Left lung (tissue), 14 donors: ENCODE measurements at regions of chr6 and their contacts with region 1.

Region 1: GRCh38 chr6:37018198-37019064 is 13.0 kb downstream of the FGD2 start:
- DNase-seq: peak; percentile 68 to 95 (median 90)
- ATAC-seq: peak; percentile 98
- H3K4me3 ChIP-seq: no peak overlapping the region
- H3K27ac ChIP-seq: peak overlapping the region in 1 of 2 donors; percentile 50
- H3K4me1 ChIP-seq: peaks cover 0 to 26% of the 10 kb centered on the region in 2 donors
- H3K27me3 ChIP-seq: no peaks in the 10 kb centered on the region
- CTCF ChIP-seq: peak; percentile 81 to 94

Region 2: GRCh38 chr6:36765594-36766398 is 252.6 kb before region 1 on chr6:
- intact Hi-C with region 1: loop called in 1 of 2 experiments (anchors 2 kb)
- DNase-seq: peak; percentile 51 to 91 (median 85)
- ATAC-seq: peak; percentile 95
- H3K4me3 ChIP-seq: no peak overlapping the region
- H3K27ac ChIP-seq: no peak overlapping the region
- H3K4me1 ChIP-seq: peaks cover 0 to 44% of the 10 kb centered on the region in 2 donors
- H3K27me3 ChIP-seq: no peaks in the 10 kb centered on the region
- CTCF ChIP-seq: peak; percentile 88 to 92

Region 3: GRCh38 chr6:37131104-37131959 is 112.9 kb after region 1 on chr6:
- intact Hi-C with region 1: no loop called
- DNase-seq: peak in 2 of 4 donors; percentile 72 to 81
- ATAC-seq: peak; percentile 63
- H3K4me3 ChIP-seq: no peak overlapping the region
- H3K27ac ChIP-seq: peak overlapping the region; percentile 77 to 85
- H3K4me1 ChIP-seq: peaks cover 17 to 55% of the 10 kb centered on the region in 2 donors
- H3K27me3 ChIP-seq: no peaks in the 10 kb centered on the region
- CTCF ChIP-seq: no peak

Region 4: GRCh38 chr6:37210313-37210968 is 192.0 kb after region 1 on chr6:
- intact Hi-C with region 1: loop called in 1 of 2 experiments (anchors 5 kb)
- DNase-seq: peak in 3 of 4 donors; percentile 57 to 83 (median 68)
- ATAC-seq: peak; percentile 88
- H3K4me3 ChIP-seq: no peak overlapping the region
- H3K27ac ChIP-seq: no peak overlapping the region
- H3K4me1 ChIP-seq: peaks cover 0 to 50% of the 10 kb centered on the region in 2 donors
- H3K27me3 ChIP-seq: no peaks in the 10 kb centered on the region
- CTCF ChIP-seq: peak; percentile 90 to 96